PC-9 (cell line): ENCODE measurements at regions of chr11 and their contacts with region 1.

Region 1: DNA sequence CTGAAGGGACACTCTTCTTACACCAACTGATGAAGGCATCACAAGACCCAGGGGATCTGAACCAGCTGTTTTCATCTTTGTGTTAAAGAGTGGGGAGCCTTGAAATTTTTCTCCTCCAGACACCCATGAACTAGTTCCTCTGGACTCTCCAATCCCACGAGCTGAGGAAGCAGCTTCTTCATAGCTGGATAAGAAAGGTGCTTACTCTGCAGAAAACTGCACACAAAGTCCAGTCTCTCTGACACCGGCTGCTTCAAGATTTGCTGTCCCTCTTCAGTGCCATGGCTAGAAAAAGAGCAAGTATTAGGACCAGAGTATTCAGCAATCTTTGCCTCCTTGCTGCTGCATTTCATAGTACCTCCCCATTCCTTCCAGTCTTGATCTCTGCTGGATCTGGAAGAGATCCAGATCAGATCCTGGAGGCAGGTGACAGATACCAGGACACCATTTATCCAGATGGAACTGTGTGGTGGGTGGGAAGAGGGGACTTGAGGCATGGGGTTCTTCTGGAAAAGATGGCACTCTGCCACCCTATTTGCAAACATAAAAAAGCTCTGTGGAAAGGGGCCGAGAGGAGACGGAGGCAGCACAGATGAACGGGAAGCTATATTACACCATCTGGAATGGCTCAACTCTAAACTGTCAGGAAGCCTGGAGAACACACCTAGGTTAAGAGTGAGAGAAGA is 25.5 kb downstream of the IL18BP start:
- DNase-seq: no peak
- H3K4me3 ChIP-seq: no peak overlapping the region
- H3K27ac ChIP-seq: no peak overlapping the region
- H3K4me1 ChIP-seq: no peaks in the 10 kb centered on the region
- H3K27me3 ChIP-seq: no peaks in the 10 kb centered on the region
- CTCF ChIP-seq: no peak

Region 2: DNA sequence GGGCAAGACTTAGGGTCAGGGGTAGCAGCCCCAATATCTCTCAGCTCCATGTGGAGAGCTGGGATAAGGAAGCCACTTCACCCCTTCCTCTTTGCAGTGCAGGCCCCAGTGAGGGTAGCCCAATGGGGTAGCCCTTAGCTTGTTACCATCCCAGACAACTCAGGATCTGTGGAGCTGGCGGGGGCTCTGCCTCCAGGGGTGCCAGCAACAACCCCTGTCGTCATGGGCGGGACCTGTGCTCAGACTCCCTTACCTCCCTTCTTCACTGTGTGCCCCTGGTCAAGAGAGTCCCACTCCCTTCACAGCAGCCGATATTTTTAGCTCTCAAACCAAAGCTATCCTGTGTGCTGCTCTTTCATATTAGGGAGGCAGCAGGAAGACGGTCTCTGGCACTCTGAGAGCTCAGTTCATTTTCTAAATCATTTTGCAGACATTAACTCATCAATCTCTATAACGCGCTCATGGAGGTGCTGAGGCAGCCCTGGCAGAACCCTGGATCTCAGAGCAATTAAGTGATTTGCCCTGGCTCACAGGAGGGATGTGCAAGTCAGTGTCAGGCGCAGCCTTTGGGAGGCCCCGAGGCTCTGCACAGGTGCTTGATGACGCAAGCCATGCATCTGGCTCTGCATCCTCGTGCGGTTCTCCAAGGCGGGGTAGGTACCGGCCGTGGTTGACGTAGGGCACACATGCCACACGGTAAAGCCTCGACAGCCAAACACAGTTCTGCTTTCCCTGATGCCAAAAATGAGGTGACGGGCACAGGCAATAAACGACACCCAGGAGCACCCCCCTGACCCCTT is 1129.4 kb before region 1 on chr11:
- CTCF ChIA-PET with region 1: no interaction called
- POLR2A ChIA-PET with region 1: no interaction called
- intact Hi-C with region 1: no loop called
- DNase-seq: no peak
- H3K4me3 ChIP-seq: no peak overlapping the region
- H3K27ac ChIP-seq: no peak overlapping the region
- H3K4me1 ChIP-seq: no peaks in the 10 kb centered on the region
- H3K27me3 ChIP-seq: no peaks in the 10 kb centered on the region
- CTCF ChIP-seq: no peak

Region 3: DNA sequence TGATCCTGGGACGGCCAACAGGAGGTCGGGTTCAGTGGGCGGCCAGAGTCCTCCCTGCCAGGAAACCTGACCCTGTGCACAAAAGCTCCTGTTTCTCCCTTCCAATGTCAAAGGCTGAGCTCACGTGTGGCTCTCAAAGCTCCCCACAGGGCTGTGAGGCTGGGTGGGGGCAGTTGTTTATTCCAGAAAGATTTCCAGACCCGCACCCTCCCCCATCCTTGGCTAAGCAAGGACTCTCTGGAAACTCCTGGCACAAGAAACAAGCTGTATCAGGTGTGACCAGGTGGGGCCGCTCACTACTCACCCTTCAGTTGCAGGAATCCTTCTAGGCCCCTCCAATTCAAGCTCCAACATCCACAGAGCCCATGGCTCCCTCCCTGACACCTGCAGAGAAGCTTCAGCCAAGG is 903.7 kb before region 1 on chr11:
- CTCF ChIA-PET with region 1: no interaction called
- POLR2A ChIA-PET with region 1: no interaction called
- intact Hi-C with region 1: no loop called
- DNase-seq: peak; percentile 31 to 57
- H3K4me3 ChIP-seq: no peak overlapping the region
- H3K27ac ChIP-seq: no peak overlapping the region
- H3K4me1 ChIP-seq: no peaks in the 10 kb centered on the region
- H3K27me3 ChIP-seq: no peaks in the 10 kb centered on the region
- CTCF ChIP-seq: peak; percentile 72

Region 4: GRCh38 chr11:72091005-72091691 is 66.9 kb after region 1 on chr11:
- CTCF ChIA-PET with region 1: interaction called, 23 read pairs
- POLR2A ChIA-PET with region 1: no interaction called
- intact Hi-C with region 1: loop called (anchors 1 kb)
- DNase-seq: peak in 1 of 2 experiments; percentile 60
- H3K4me3 ChIP-seq: no peak overlapping the region
- H3K27ac ChIP-seq: 0 out of 2 replicates have a peak overlapping the region, but pooled peaks have one; percentile 8
- H3K4me1 ChIP-seq: no peaks in the 10 kb centered on the region
- H3K27me3 ChIP-seq: no peaks in the 10 kb centered on the region
- CTCF ChIP-seq: peak; percentile 93